ENCODE measurements at regions of chr9 and their contacts with region 1.

Region 1: DNA sequence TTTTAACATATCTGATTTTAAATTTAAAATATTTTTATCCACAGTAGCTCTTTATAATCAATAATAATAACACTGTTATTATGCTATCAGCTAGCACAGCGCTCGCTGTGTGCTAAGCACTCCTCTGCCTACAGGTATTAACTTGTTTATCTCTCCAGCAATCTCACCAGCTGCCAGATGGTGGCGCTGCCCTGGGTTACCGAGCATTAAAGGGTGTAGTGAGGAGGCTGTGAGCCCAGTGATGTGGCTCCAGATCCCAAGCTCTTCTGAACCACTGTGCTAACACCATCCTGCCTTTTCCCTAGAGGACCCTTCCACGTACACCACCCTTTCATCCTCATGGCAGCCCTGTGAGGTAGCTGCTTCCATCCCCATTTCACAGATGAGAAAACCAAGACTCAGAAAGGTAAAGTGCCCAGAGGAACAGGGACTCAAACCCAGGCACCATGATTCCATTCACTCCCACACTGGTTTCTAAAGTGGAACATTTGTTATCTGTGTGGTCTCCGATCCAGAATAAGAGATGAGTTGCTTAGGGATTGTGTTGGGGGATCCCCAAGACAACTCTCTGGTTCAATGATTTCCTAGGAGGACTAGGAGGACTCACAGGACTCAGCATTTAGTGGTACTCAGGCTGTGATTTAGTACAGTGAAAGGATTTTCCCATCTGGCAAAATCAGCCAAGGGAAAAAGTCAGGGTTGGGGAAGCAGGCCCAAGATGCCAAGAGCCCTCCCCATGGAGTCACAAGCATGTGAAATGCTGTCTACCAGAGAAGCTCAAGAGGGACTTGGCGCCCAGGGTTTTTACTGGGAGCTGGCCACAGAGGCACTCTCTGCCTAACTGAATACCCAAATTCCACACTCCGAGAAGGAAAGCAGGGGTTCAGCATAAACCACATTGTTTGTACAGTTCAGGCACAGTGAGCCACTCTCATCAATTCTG is 7.0 kb downstream of the IGFBPL1 start:
- DNase-seq: no peak
- H3K4me3 ChIP-seq: no peak overlapping the region
- H3K27ac ChIP-seq: peak overlapping the region; percentile 33 to 40
- H3K4me1 ChIP-seq: peaks cover 0 to 23% (median 3%) of the 10 kb centered on the region in 4 donors
- H3K27me3 ChIP-seq: no peaks in the 10 kb centered on the region
- CTCF ChIP-seq: peak; percentile 25 to 26

Region 2: DNA sequence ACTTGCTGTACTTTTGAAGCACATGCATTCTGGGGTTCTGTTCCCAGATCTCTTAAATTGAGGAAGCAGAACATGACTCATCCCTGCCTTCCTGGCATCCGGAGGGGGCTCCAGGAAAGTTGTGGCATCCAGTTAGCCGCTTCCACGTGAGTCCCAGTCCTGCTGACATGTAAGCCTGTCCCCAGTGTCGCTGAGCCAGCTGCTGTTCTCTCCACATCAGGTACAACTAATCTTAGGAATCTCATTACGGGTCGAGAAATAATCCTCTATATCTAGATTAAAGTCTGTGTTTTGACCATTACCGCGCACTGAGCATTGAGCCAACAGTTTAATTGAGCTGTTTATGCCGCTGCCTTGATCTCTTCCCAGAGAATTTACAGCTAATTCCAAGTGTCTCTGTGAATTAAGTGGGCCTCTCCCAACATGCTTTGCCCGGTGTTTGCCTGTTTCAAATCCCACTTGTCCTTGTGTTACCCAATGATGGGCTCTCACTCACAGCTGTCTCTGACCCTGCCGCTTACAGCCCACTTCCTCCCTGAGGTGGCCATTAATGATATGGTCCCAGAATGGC is 337.7 kb before region 1 on chr9:
- intact Hi-C with region 1: loop called (anchors 10 kb)
- DNase-seq: peak in 1 of 2 donors; percentile 72
- H3K4me3 ChIP-seq: no peak overlapping the region
- H3K27ac ChIP-seq: no peak overlapping the region
- H3K4me1 ChIP-seq: peaks cover 0 to 16% (median 9%) of the 10 kb centered on the region in 4 donors
- H3K27me3 ChIP-seq: no peaks in the 10 kb centered on the region
- CTCF ChIP-seq: no peak

Region 3: GRCh38 chr9:38318759-38319495 is 98.3 kb before region 1 on chr9:
- intact Hi-C with region 1: loop called (anchors 10 kb)
- DNase-seq: no peak
- H3K4me3 ChIP-seq: peak overlapping the region; percentile 21 to 25
- H3K27ac ChIP-seq: peak overlapping the region; percentile 49 to 52
- H3K4me1 ChIP-seq: peaks cover 0 to 4% (median 0%) of the 10 kb centered on the region in 4 donors
- H3K27me3 ChIP-seq: no peaks in the 10 kb centered on the region
- CTCF ChIP-seq: no peak